GM12878 (cell line): ENCODE measurements at regions of chr15 and their contacts with region 1.

Region 1: GRCh38 chr15:38683382-38684242 is 119.0 kb upstream of the RASGRP1 start:
- DNase-seq: no peak
- ATAC-seq: peak; percentile 94
- H3K4me3 ChIP-seq: no peak overlapping the region
- H3K27ac ChIP-seq: no peak overlapping the region
- H3K4me1 ChIP-seq: peaks cover 5% of the 10 kb centered on the region
- H3K27me3 ChIP-seq: no peaks in the 10 kb centered on the region
- CTCF ChIP-seq: peak; percentile 73 to 91 (median 88)
- EP300 ChIP-seq: no peak
- POLR2A ChIP-seq: no peak
- RAD21 ChIP-seq: peak; percentile 99

Region 2: GRCh38 chr15:38479266-38479665 is 204.3 kb before region 1 on chr15:
- CTCF ChIA-PET with region 1: interaction called, 219 read pairs
- POLR2A ChIA-PET with region 1: no interaction called
- RAD21 ChIA-PET with region 1: interaction called, 148 read pairs
- SMC1A ChIA-PET with region 1: interaction called, 115 read pairs
- in situ Hi-C with region 1: no loop called
- intact Hi-C with region 1: loop called (anchors 1 kb)
- DNase-seq: no peak
- ATAC-seq: no peak
- H3K4me3 ChIP-seq: no peak overlapping the region
- H3K27ac ChIP-seq: no peak overlapping the region
- H3K4me1 ChIP-seq: no peaks in the 10 kb centered on the region
- H3K27me3 ChIP-seq: no peaks in the 10 kb centered on the region
- CTCF ChIP-seq: no peak
- EP300 ChIP-seq: no peak
- POLR2A ChIP-seq: no peak
- RAD21 ChIP-seq: no peak

Region 3: DNA sequence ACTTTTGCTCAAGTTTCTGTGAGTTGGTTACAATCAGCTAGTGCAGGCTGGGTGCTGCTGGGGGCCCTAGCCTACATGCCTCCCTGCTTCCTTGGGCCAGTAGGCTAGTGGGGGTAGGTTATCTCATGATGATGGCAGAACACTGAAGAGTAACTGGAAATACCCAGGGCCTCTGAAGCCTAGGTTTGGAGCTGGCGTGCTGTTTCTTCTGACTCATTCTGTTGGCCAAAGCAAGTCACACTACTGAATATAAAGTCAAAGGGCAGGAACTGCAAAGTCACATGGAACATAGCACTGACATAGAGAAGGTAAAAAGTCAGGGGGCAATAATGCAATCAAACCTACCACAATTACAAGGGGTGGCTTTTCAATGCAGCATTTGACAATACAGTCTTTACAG is 153.5 kb before region 1 on chr15:
- CTCF ChIA-PET with region 1: interaction called, 24 read pairs
- POLR2A ChIA-PET with region 1: interaction called, 3 read pairs
- RAD21 ChIA-PET with region 1: interaction called, 21 read pairs
- SMC1A ChIA-PET with region 1: interaction called, 24 read pairs
- in situ Hi-C with region 1: no loop called
- intact Hi-C with region 1: no loop called
- DNase-seq: peak; percentile 24
- ATAC-seq: peak; percentile 93
- H3K4me3 ChIP-seq: no peak overlapping the region; the same call in 1 of the 2 replicates
- H3K27ac ChIP-seq: peak overlapping the region; percentile 40; the same call in 1 of the 2 replicates
- H3K4me1 ChIP-seq: no peaks in the 10 kb centered on the region
- H3K27me3 ChIP-seq: no peaks in the 10 kb centered on the region
- CTCF ChIP-seq: no peak
- EP300 ChIP-seq: no peak
- POLR2A ChIP-seq: no peak
- RAD21 ChIP-seq: no peak

Region 4: DNA sequence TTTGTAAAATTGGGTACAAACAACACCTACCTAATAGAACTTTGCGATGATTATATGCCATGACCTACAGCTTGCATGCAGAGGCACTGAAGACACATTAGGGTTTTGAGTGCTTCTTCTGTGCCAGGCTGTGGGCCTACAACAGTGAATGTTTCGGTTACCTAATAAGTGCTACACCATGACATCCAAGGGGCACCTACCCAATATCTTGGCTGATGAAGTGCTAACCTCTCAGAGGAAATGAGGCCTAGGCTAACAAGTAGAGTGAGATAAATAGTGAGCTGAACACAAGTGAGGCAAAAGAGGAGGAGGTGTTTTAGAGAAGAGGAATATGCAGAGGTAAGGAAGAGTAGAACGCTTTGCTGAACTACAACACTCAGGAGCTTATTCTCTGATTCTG is 106.8 kb before region 1 on chr15:
- CTCF ChIA-PET with region 1: interaction called, 3 read pairs
- POLR2A ChIA-PET with region 1: no interaction called
- RAD21 ChIA-PET with region 1: interaction called, 5 read pairs
- SMC1A ChIA-PET with region 1: interaction called, 16 read pairs
- in situ Hi-C with region 1: no loop called
- intact Hi-C with region 1: no loop called
- DNase-seq: no peak
- ATAC-seq: no peak
- H3K4me3 ChIP-seq: no peak overlapping the region
- H3K27ac ChIP-seq: no peak overlapping the region
- H3K4me1 ChIP-seq: no peaks in the 10 kb centered on the region
- H3K27me3 ChIP-seq: no peaks in the 10 kb centered on the region
- CTCF ChIP-seq: no peak
- EP300 ChIP-seq: no peak
- POLR2A ChIP-seq: no peak
- RAD21 ChIP-seq: no peak

Region 5: DNA sequence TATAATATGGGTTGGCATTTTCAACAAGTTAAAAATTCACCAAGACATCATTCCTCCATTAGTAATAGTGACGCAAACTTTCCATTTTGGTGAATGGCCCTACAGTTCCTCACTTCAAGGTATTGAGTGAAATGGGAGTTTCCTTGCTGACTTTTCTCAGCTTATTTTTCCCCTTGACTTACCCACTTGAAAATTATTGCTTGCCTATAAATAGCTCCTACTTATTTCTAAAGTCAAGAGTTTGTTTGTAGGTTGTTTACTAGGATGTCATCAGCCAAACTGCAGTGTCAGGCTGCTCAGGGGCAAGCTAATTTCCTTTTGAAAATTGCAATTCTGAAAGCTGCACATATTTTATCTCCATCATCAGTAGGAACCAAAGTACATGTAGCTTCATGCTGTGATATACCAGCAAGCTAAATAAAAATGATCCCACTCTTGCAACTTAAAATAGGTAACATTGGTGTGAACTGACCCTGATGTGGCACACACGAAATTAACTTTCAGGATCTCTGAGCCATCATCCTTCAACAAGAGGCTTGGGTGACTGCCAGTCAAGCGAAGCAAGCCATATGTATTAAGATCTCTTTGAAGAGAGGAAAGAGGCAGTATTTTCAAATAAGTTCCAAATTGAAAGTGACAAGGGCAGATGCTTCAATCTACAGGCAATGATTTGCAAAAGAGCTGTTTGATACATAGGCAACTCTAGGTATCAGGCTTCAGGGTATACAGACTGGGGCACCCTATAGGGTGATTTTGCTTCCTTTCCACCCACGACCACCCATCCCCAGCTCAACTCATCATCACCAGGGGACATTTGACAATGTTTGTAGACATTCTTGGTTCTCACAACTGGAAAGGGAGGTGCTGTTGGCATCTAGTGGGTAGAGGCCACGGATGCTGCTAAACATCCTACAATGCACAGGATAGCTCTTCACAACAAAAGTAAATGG is 52.2 kb before region 1 on chr15:
- CTCF ChIA-PET with region 1: interaction called, 63 read pairs
- POLR2A ChIA-PET with region 1: interaction called, 9 read pairs
- RAD21 ChIA-PET with region 1: interaction called, 322 read pairs
- SMC1A ChIA-PET with region 1: interaction called, 1,803 read pairs
- in situ Hi-C with region 1: no loop called
- intact Hi-C with region 1: no loop called
- DNase-seq: no peak
- ATAC-seq: peak; percentile 77
- H3K4me3 ChIP-seq: no peak overlapping the region
- H3K27ac ChIP-seq: no peak overlapping the region; the same call in 1 of the 2 replicates
- H3K4me1 ChIP-seq: no peaks in the 10 kb centered on the region
- H3K27me3 ChIP-seq: no peaks in the 10 kb centered on the region
- CTCF ChIP-seq: no peak
- EP300 ChIP-seq: no peak; a peak in 2 of 4 replicates
- POLR2A ChIP-seq: no peak
- RAD21 ChIP-seq: no peak

Region 6: DNA sequence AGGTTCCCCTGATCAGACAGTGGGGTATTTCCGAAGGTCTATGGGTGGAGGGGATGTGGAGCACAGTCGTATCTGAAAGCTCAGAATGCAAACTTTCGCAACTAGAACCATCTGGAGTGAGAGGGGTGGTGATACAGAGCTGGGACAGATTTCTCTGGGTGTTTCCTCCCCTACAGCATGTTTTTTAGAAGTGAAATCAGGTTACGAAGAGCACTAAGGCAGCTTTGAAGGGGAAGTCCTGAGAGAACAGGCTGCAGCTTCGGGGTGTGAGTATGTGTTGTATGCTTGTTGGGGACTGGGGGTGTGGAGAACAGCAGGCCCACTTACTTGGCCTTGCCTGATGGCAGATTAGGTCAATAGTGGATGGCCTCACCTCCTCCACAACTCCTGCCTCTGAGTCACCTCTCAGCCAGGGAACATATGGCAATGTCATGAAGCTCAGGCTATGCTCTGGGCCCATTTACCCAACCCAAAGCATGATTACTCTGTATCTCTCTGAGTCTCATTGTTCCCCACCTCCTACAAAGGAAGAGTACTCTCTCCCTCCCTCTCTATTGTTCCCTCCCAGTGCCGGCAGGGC is 11.8 kb before region 1 on chr15:
- CTCF ChIA-PET with region 1: interaction called, 173 read pairs
- POLR2A ChIA-PET with region 1: interaction called, 45 read pairs
- RAD21 ChIA-PET with region 1: interaction called, 134 read pairs
- SMC1A ChIA-PET with region 1: interaction called, 225 read pairs
- in situ Hi-C with region 1: no loop called
- intact Hi-C with region 1: no loop called
- DNase-seq: peak; percentile 91
- ATAC-seq: peak; percentile 76
- H3K4me3 ChIP-seq: no peak overlapping the region
- H3K27ac ChIP-seq: peak overlapping the region; percentile 77
- H3K4me1 ChIP-seq: peaks cover 56% of the 10 kb centered on the region
- H3K27me3 ChIP-seq: no peaks in the 10 kb centered on the region
- CTCF ChIP-seq: no peak
- EP300 ChIP-seq: peak in 1 of 2 experiments; percentile 7; a peak in 2 of 4 replicates
- POLR2A ChIP-seq: peak; percentile 61
- RAD21 ChIP-seq: no peak; the same call in 1 of the 2 replicates